Pancreas (tissue), 10 donors: ENCODE measurements at regions of chr1 and their contacts with region 1.

Region 1: GRCh38 chr1:115138968-115139367 is 49.7 kb upstream of the TSPAN2 start:
- DNase-seq: peak; percentile 74 to 94 (median 86)
- ATAC-seq: peak; percentile 98 to 100 (median 98)
- H3K4me3 ChIP-seq: no peak overlapping the region
- H3K27ac ChIP-seq: no peak overlapping the region
- H3K4me1 ChIP-seq: no peaks in the 10 kb centered on the region
- H3K27me3 ChIP-seq: no peaks in the 10 kb centered on the region
- CTCF ChIP-seq: peak; percentile 59 to 85 (median 79)

Region 2: DNA sequence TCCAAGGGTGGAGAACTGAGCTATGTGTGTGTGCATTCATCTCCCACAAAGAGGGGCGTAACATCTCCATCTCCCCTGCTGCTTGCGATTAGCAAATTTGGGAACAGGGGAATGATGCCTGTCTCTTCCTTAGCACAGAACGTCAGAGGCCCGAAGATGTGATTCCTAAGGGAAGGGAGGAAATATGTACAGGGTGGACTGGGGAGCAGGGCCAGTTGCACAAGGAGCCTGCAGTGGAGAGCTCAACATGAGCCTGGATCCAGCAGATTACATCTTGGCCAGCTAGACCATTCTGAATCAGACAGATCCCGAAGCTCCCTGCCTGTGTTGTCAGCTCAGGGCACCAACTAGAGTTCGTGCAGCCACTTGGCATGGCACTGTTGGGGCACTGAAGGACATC is 81.0 kb after region 1 on chr1:
- intact Hi-C with region 1: no loop called
- DNase-seq: no peak
- ATAC-seq: peak in 3 of 4 donors; percentile 28 to 65 (median 46)
- H3K4me3 ChIP-seq: no peak overlapping the region
- H3K27ac ChIP-seq: no peak overlapping the region
- H3K4me1 ChIP-seq: no peaks in the 10 kb centered on the region
- H3K27me3 ChIP-seq: no peaks in the 10 kb centered on the region
- CTCF ChIP-seq: no peak

Region 3: GRCh38 chr1:115469703-115470476 is 330.9 kb after region 1 on chr1:
- intact Hi-C with region 1: loop called in 2 of 3 experiments (anchors 5 kb)
- DNase-seq: peak in 4 of 6 donors; percentile 59 to 81 (median 71)
- ATAC-seq: peak; percentile 55 to 98 (median 91)
- H3K4me3 ChIP-seq: no peak overlapping the region
- H3K27ac ChIP-seq: no peak overlapping the region
- H3K4me1 ChIP-seq: no peaks in the 10 kb centered on the region
- H3K27me3 ChIP-seq: no peaks in the 10 kb centered on the region
- CTCF ChIP-seq: peak; percentile 63 to 90 (median 86)

Region 4: DNA sequence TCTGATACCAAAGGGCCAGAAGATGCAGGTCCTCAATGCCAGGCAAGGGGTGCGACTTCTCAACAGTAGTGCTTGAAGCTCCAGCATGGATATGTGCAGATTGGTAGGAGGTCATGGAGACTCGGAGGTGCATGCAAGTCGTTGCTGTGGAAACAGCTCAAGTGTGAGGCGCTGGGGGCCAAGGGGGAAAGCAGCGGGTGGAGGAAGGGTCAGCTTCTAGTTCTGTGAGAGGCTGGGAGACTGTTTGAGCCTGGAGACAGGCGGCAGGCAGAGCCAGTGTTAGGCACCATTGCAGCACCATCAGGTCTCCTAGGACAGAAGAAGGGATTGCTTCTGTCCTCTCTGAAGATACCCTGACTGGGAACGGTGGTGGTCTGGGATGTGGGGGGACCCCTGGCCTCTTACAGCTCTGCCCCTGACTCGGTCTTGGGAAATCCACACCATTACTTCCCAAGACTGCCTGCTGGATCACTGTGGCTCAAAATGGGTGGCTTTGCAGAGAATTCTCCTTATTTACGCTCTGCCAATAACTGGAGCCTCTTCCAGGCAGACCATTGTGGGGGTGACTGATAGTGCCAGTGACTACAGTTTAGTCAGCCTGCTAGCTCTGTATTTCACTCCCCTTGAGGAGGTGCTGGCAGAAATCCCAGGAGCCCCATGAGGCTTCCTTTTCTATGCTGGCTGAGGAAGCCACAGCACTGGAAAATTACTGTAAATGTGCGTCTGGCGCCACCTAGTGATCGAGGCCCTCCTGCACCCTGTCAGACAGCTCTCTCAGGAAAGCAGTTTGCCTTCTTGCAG is 456.5 kb after region 1 on chr1:
- intact Hi-C with region 1: loop called in 1 of 3 experiments (anchors 5 kb)
- DNase-seq: peak; percentile 62 to 90 (median 83)
- ATAC-seq: peak; percentile 77 to 98 (median 95)
- H3K4me3 ChIP-seq: no peak overlapping the region
- H3K27ac ChIP-seq: no peak overlapping the region
- H3K4me1 ChIP-seq: no peaks in the 10 kb centered on the region
- H3K27me3 ChIP-seq: no peaks in the 10 kb centered on the region
- CTCF ChIP-seq: peak; percentile 83 to 96 (median 87)